A549 (cell line): ENCODE measurements at regions of chr1 and their contacts with region 1.

Region 1: GRCh38 chr1:151156515-151156819 is at the start of gene TNFAIP8L2:
- DNase-seq: no peak
- ATAC-seq: peak; percentile 72 to 82
- H3K4me3 ChIP-seq: no peak within 1 kb of the TSS
- H3K27ac ChIP-seq: no peak within 1 kb of the TSS
- H3K4me1 ChIP-seq: no peaks in the 10 kb centered on the region
- CTCF ChIP-seq: no peak
- EP300 ChIP-seq: no peak
- POLR2A ChIP-seq: no peak
- RAD21 ChIP-seq: no peak
- polyA plus RNA-seq, gene TNFAIP8L2: not detected in 2 replicates

Region 2: GRCh38 chr1:151142411-151143056 is 13.9 kb before region 1 on chr1:
- CTCF ChIA-PET with region 1: interaction called, 37 read pairs
- POLR2A ChIA-PET with region 1: no interaction called
- DNase-seq: no peak
- ATAC-seq: no peak
- H3K4me3 ChIP-seq: no peak overlapping the region
- H3K27ac ChIP-seq: no peak overlapping the region
- H3K4me1 ChIP-seq: peaks cover 10% of the 10 kb centered on the region; the same call in 2 of the 3 replicates
- CTCF ChIP-seq: no peak
- EP300 ChIP-seq: no peak
- POLR2A ChIP-seq: no peak
- RAD21 ChIP-seq: no peak